BJ (cell line): ENCODE measurements at regions of chr17 and their contacts with region 1.

Region 1: DNA sequence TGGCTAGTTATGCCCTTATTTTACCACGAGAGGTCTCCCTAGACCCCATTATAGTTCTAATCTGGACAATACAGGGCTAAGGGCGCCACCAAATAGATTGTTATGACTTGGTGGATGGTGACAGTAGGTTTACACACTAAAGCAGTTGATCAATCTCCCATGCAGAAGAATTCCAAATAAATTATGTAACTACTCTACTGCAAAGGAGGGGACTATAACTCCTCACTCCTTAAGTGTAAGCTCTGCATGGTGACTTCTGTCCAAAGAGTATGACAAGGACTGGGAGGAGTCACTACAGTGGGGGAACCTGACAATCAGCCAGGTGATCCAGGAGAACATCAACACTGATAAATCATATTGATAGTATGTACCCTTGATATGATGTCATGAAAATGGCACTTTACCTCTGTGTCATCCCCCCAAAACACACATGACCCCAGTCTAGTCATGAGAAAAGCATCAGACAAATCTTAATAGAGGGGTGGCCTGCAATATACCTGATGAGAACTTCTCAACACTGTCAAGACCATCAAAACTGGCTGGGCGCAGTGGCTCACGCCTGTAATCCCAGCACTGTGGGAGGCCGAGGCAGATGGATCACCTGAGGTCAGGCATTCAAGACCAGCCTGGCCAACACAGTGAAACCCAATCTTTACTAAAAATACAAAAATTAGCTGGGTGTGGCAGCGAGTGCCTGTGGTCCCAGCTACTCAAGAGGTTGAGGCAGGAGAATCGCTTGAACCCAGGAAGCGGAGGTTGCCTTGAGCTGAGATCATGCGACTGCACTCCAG is 20.1 kb upstream of the YPEL2 start:
- DNase-seq: no peak
- H3K4me3 ChIP-seq: no peak overlapping the region
- H3K27me3 ChIP-seq: no peaks in the 10 kb centered on the region
- CTCF ChIP-seq: peak; percentile 75

Region 2: GRCh38 chr17:59331129-59331928 is 20.0 kb after region 1 on chr17 and contains the start of gene YPEL2:
- CTCF ChIA-PET with region 1: interaction called, 18 read pairs
- POLR2A ChIA-PET with region 1: no interaction called
- DNase-seq: peak; percentile 40
- H3K4me3 ChIP-seq: peak within 1 kb of the TSS; percentile 94
- H3K27me3 ChIP-seq: peaks cover 6% of the 10 kb centered on the region
- CTCF ChIP-seq: no peak
- polyA plus RNA-seq, gene YPEL2: 8.4 and 9.2 TPM in 2 replicates

Region 3: GRCh38 chr17:59427425-59427921 is 116.1 kb after region 1 on chr17:
- CTCF ChIA-PET with region 1: interaction called, 12 read pairs
- POLR2A ChIA-PET with region 1: no interaction called
- DNase-seq: no peak
- H3K4me3 ChIP-seq: no peak overlapping the region
- H3K27me3 ChIP-seq: no peaks in the 10 kb centered on the region
- CTCF ChIP-seq: no peak

Region 4: GRCh38 chr17:59440784-59441441 is 129.6 kb after region 1 on chr17:
- CTCF ChIA-PET with region 1: interaction called, 80 read pairs
- POLR2A ChIA-PET with region 1: no interaction called
- DNase-seq: no peak
- H3K4me3 ChIP-seq: no peak overlapping the region
- H3K27me3 ChIP-seq: no peaks in the 10 kb centered on the region
- CTCF ChIP-seq: peak; percentile 80

Region 5: DNA sequence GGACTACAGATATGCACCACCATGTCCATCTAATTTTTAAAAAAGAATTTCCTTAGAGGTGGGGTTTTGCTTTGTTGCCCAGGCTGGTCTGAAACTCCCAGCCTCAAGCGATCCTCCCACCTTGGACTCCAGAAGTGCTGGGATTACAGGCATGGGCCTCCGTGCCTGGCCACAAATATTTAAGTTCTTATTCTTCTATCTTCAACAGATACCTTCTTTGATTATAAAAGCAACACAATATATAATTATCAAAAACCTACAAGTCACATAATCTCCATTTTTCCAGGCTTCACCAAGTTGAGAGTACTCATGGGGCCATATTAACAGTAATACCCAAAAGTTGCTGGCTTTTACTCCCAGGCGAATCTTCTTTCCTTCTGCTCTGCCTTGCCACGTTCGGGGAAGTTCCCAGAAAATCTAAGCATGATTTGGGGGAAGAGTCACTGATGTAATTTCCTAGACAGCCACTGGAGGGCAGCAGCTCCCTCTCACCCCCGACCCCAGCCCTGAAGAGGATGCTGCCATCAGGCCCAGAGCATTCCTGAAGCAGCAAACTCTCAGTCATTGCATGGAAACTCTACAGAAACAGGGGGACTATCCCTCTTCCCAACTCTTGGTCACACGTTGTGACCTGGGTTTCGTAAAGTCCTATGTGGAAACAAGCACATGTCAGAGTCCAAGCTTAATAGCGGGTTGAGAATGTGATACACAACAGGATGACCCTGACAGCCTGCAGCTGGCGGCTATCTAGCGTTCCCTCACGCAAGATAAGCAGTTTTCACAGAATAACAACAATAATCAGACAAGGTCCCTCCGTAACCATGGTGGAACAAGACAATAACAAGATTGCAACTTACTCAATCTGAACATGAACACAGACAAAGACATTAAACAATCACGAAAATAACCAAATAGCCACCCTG is 210.1 kb after region 1 on chr17:
- CTCF ChIA-PET with region 1: interaction called, 12 read pairs
- POLR2A ChIA-PET with region 1: no interaction called
- DNase-seq: no peak
- H3K4me3 ChIP-seq: no peak overlapping the region
- H3K27me3 ChIP-seq: peaks cover under 1% of the 10 kb centered on the region; the same call in 1 of the 2 replicates
- CTCF ChIP-seq: peak; percentile 89

Region 6: DNA sequence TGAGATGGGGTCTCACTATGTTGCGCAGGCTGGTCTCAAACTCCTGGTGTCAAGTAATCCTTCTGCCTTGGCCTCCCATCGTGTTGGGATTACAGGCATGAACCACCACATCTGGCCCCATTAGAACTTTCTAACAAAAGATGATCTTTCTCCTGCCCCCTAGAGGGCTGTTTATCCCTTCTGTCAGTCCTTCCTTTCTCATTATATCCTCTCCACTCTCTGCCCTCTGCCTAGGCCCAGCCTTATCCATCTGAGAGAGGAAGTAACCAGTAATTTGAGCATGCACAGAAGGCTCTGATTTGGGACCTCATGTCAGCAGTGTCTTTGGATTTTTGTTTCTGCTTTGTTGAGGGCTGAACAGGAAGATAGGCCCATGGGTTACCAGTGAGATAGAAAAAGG is 249.7 kb after region 1 on chr17:
- CTCF ChIA-PET with region 1: interaction called, 12 read pairs
- POLR2A ChIA-PET with region 1: no interaction called
- DNase-seq: no peak
- H3K4me3 ChIP-seq: no peak overlapping the region
- H3K27me3 ChIP-seq: peaks cover 1% of the 10 kb centered on the region; the same call in 1 of the 2 replicates
- CTCF ChIP-seq: peak; percentile 39